Sigmoid colon (tissue), 7 donors: ENCODE measurements at regions of chr3 and their contacts with region 1.

Region 1: DNA sequence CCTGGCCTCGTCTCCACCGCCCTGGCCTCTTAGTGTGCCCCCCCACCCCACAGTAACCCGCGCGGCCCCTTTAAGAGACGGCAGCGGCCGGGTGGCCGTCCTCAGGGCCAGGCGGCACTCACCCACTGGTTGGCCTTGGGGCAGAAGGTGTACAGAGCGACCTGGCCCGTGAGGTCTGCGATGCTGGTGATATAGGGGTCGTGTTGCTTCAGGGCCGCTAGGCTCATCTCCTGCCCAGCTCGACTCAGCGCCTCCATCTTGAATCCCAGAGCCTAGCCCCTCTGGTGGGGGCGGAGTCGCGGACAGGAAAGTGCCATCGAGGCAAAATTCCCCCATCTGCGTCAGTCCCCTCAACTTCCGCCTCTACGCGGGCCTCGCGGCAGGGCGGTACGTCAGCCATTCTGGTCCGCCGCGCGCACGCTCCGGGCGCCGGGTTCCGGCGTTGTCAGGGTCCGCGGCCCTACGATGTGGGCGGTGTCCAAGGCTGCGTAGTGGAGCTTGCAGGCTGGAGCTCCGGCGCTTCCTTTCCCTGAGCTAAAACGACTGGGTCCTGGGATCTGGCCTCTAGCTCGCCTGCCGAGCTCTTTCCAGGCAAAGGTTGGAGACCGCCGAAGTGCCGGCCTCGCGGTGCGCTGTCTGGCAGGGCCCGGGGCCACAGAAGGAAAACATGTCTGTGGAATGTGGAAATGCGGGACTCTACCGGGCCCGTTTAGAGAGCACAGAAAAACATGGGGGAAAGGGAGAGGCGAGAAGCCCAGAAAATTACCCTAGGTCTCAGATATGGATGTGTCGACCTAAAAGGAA is at the start of gene DCP1A:
- DNase-seq: peak; percentile 98
- H3K4me3 ChIP-seq: peak within 1 kb of the TSS; percentile 92 to 96 (median 92)
- H3K27ac ChIP-seq: peak within 1 kb of the TSS; percentile 93 to 97 (median 96)
- H3K4me1 ChIP-seq: peaks cover 0 to 30% (median 21%) of the 10 kb centered on the region in 4 donors
- H3K27me3 ChIP-seq: no peaks in the 10 kb centered on the region
- CTCF ChIP-seq: no peak
- EP300 ChIP-seq: peak in 1 of 4 donors; percentile 66
- POLR2A ChIP-seq: peak; percentile 84 to 89
- total RNA-seq, gene DCP1A: 21.0 to 32.7 (median 22.6) TPM

Region 2: GRCh38 chr3:53089511-53089910 is 258.0 kb before region 1 on chr3:
- intact Hi-C with region 1: no loop called
- DNase-seq: no peak
- H3K4me3 ChIP-seq: no peak overlapping the region
- H3K27ac ChIP-seq: no peak overlapping the region
- H3K4me1 ChIP-seq: peaks cover 0 to 1% (median 0%) of the 10 kb centered on the region in 4 donors
- H3K27me3 ChIP-seq: no peaks in the 10 kb centered on the region
- CTCF ChIP-seq: no peak
- EP300 ChIP-seq: no peak
- POLR2A ChIP-seq: no peak

Region 3: DNA sequence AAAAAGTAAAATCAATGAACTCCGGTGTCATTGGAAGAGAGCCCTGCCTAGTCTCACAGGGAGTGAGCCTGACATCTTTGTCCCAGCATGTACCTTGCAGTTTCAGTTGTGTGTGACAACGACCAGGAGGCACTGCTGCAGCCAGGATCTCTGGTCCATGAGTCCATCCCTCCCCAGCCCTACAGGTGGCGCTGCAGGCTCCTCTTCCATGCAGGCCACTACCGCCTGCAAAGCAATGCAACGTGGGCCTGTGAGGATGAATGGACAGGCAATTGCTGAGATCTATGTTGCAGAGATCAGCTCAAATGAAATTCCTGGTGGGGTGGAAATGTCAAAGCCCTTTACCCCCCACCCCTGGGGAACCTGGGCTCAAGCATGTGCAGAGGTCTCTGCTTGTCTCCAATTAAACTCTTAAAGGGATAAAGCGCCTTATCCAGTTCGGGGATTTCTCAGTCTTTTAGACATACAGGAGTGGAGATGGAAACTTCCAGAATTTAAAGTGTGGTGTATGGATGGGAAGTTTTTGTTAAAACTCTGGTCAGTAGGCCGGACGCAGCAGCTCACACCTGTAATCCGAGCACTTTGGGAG is 127.5 kb before region 1 on chr3:
- intact Hi-C with region 1: loop called (anchors 10 kb)
- DNase-seq: peak; percentile 89
- H3K4me3 ChIP-seq: no peak overlapping the region
- H3K27ac ChIP-seq: no peak overlapping the region
- H3K4me1 ChIP-seq: peaks cover 0 to 3% (median 0%) of the 10 kb centered on the region in 4 donors
- H3K27me3 ChIP-seq: no peaks in the 10 kb centered on the region
- CTCF ChIP-seq: peak; percentile 74 to 85 (median 83)
- EP300 ChIP-seq: no peak
- POLR2A ChIP-seq: no peak

Region 4: DNA sequence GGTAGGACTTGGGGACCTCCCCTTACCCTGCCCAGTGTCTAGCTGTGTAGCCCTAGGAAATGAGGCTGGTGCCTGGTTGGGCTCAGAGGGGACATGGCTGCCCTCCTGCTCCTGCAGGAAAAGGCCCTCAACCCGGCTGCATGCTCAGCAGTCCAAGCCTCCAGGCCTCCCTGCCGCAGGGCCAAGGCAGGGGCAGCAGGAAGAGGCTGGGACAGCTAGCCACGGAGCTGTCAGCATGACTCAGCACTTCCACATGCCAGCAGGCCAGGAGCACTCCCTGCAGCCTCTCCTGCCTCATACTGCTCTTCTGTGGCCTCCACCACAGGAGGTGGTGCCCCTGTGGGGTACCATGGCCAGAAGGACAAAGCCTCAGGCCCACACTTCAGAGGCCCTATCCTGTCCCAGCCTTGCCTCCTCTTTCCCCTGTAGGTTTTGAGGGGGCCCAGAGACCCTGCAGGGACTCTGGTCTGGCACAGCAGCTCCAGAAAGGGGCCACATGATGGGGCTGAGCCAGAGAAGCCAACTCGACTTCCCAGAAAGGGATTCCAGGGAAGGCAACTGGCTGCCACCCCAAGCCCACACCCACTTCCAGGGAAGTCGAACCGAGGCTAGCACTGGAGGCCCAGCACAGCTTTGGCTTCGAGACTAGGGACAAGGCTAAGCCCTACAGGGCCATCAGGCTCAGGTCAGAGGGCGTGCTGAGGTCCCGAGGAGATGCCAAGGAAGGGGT is 111.2 kb before region 1 on chr3:
- intact Hi-C with region 1: no loop called
- DNase-seq: peak; percentile 86
- H3K4me3 ChIP-seq: no peak overlapping the region
- H3K27ac ChIP-seq: peak overlapping the region; percentile 67 to 77 (median 72)
- H3K4me1 ChIP-seq: peaks cover 0 to 58% (median 40%) of the 10 kb centered on the region in 4 donors
- H3K27me3 ChIP-seq: no peaks in the 10 kb centered on the region
- CTCF ChIP-seq: no peak
- EP300 ChIP-seq: no peak
- POLR2A ChIP-seq: no peak

Region 5: DNA sequence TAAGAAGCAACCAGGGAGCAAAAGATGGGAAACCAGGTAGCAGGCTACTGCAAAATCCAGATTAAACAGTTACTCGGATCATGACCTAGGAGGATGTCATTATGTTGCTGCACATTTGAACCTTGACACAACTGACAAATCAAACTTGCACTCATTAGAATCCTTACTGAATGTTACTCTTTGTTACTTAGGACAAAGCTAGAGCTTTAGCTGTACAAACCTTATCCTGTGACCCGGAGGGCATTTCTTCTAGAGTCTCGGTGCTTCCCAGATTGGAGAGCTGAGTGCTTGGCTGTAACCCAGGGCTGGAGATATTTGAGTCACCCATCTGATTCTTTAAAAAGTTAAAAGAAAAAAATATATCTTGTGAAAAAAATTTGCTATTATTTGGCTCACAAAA is 43.5 kb before region 1 on chr3:
- intact Hi-C with region 1: loop called (anchors 5 kb)
- DNase-seq: no peak
- H3K4me3 ChIP-seq: no peak overlapping the region
- H3K27ac ChIP-seq: peak overlapping the region in 3 of 4 donors; percentile 21 to 31 (median 29)
- H3K4me1 ChIP-seq: peaks cover 0 to 23% (median 19%) of the 10 kb centered on the region in 4 donors
- H3K27me3 ChIP-seq: no peaks in the 10 kb centered on the region
- CTCF ChIP-seq: no peak
- EP300 ChIP-seq: no peak
- POLR2A ChIP-seq: no peak

Region 6: GRCh38 chr3:53426918-53427317 is 79.5 kb after region 1 on chr3:
- intact Hi-C with region 1: no loop called
- DNase-seq: no peak
- H3K4me3 ChIP-seq: no peak overlapping the region
- H3K27ac ChIP-seq: no peak overlapping the region
- H3K4me1 ChIP-seq: no peaks in the 10 kb centered on the region
- H3K27me3 ChIP-seq: no peaks in the 10 kb centered on the region
- CTCF ChIP-seq: no peak
- EP300 ChIP-seq: no peak
- POLR2A ChIP-seq: no peak

Region 7: GRCh38 chr3:53891497-53892285 is 544.2 kb after region 1 on chr3 and contains the start of gene SELENOK:
- intact Hi-C with region 1: loop called (anchors 5 kb)
- DNase-seq: peak; percentile 100
- H3K4me3 ChIP-seq: peak within 1 kb of the TSS; percentile 69 to 91 (median 81)
- H3K27ac ChIP-seq: peak within 1 kb of the TSS; percentile 88 to 97 (median 93)
- H3K4me1 ChIP-seq: peaks cover 0 to 21% (median 19%) of the 10 kb centered on the region in 4 donors
- H3K27me3 ChIP-seq: peaks cover 0 to 4% (median 0%) of the 10 kb centered on the region in 3 donors
- CTCF ChIP-seq: no peak
- EP300 ChIP-seq: peak in 2 of 4 donors; percentile 47 to 78
- POLR2A ChIP-seq: peak; percentile 96 to 98
- total RNA-seq, gene SELENOK: 61.5 to 108 (median 77.7) TPM